Activated CD4-positive, alpha-beta memory T cell treated with anti-CD3 and anti-CD28 coated beads for 36 hours (primary cell): ENCODE measurements at regions of chr4 and their contacts with region 1.

Region 1: GRCh38 chr4:153750197-153750817 is 9.5 kb downstream of the RNF175 start:
- DNase-seq: peak; percentile 74
- H3K4me3 Mint-ChIP-seq: no peak overlapping the region
- H3K27ac Mint-ChIP-seq: no peak overlapping the region
- H3K4me1 Mint-ChIP-seq: peaks cover 3% of the 10 kb centered on the region
- H3K27me3 Mint-ChIP-seq: no peaks in the 10 kb centered on the region

Region 2: GRCh38 chr4:152850377-152850776 is 899.9 kb before region 1 on chr4:
- CTCF ChIA-PET with region 1: no interaction called
- POLR2A ChIA-PET with region 1: no interaction called
- intact Hi-C with region 1: loop called (anchors 5 kb)
- DNase-seq: peak; percentile 64
- H3K4me3 Mint-ChIP-seq: no peak overlapping the region
- H3K27ac Mint-ChIP-seq: no peak overlapping the region
- H3K4me1 Mint-ChIP-seq: peaks cover 15% of the 10 kb centered on the region
- H3K27me3 Mint-ChIP-seq: no peaks in the 10 kb centered on the region

Region 3: GRCh38 chr4:153344131-153345010 is 405.9 kb before region 1 on chr4 and contains the start of gene MND1:
- CTCF ChIA-PET with region 1: interaction called, 12 read pairs
- POLR2A ChIA-PET with region 1: no interaction called
- intact Hi-C with region 1: loop called (anchors 1 kb)
- DNase-seq: peak; percentile 95
- H3K4me3 Mint-ChIP-seq: peak within 1 kb of the TSS; percentile 93
- H3K27ac Mint-ChIP-seq: peak within 1 kb of the TSS; percentile 86
- H3K4me1 Mint-ChIP-seq: peaks cover 26% of the 10 kb centered on the region
- H3K27me3 Mint-ChIP-seq: no peaks in the 10 kb centered on the region
- total RNA-seq, gene MND1: 32.0 to 36.1 TPM

Region 4: GRCh38 chr4:153643406-153644383 is 106.6 kb before region 1 on chr4:
- CTCF ChIA-PET with region 1: interaction called, 49 read pairs
- POLR2A ChIA-PET with region 1: no interaction called
- intact Hi-C with region 1: loop called (anchors 1 kb)
- DNase-seq: no peak
- H3K4me3 Mint-ChIP-seq: no peak overlapping the region
- H3K27ac Mint-ChIP-seq: no peak overlapping the region
- H3K4me1 Mint-ChIP-seq: peaks cover 17% of the 10 kb centered on the region
- H3K27me3 Mint-ChIP-seq: no peaks in the 10 kb centered on the region

Region 5: DNA sequence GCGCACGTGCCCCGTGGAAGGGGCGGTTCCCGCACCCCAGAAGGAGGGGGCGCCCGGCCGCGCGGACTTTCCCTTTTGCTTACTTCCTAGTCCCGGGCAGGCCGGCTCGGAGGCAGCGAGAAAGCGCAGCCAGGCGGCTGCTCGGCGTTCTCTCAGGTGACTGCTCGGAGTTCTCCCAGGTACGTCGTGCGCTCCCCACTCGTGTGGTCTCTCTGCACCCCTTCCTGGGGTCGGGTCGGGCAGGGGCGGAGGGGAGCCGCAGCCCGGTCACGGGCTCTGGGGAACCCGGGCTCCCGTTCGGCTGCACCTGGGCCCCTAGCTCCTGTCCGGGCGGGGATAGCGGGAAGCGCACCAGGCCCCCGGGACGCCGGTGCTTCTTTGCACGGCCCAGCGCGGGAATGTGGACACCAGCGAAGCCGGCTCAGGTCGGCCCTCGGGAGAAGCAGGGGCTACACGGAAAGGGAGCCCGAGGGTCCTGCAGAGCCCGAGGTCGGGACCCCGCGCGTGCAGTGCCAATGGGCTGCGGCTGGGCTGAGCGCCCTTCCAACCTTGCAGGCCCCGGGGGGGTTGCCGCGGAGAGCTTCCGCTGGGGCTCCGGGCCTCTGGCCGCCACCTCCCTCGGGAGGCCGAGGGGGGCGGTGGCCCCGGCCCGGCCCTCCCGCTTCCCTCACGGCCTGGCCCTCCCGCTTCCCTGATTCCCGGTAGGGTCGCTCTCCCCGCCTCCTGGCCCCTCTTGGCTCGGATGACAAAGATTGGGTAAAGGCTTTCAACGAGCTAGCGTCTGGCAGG is 65.9 kb before region 1 on chr4 and contains the start of gene TLR2:
- CTCF ChIA-PET with region 1: interaction called, 12 read pairs
- POLR2A ChIA-PET with region 1: no interaction called
- intact Hi-C with region 1: no loop called
- DNase-seq: peak; percentile 77
- H3K4me3 Mint-ChIP-seq: peak within 1 kb of the TSS; percentile 70
- H3K27ac Mint-ChIP-seq: no peak within 1 kb of the TSS
- H3K4me1 Mint-ChIP-seq: peaks cover 11% of the 10 kb centered on the region
- H3K27me3 Mint-ChIP-seq: peaks cover 26% of the 10 kb centered on the region
- total RNA-seq, gene TLR2: 1.3 to 1.6 TPM